Dorsolateral prefrontal cortex (tissue), 120 donors: ENCODE measurements at regions of chr2 and their contacts with region 1.

Region 1: GRCh38 chr2:241315093-241315878 is at the start of gene HDLBP:
- DNase-seq: peak; percentile 95 to 99 (median 97)
- H3K4me3 ChIP-seq: peak within 1 kb of the TSS; percentile 66 to 100 (median 92)
- H3K27ac ChIP-seq: peak within 1 kb of the TSS; percentile 90 to 100 (median 99)
- H3K27me3 ChIP-seq: no peaks in the 10 kb centered on the region
- CTCF ChIP-seq: peak; percentile 43 to 86 (median 68)
- total RNA-seq, gene HDLBP: 216 to 367 (median 256) TPM

Region 2: DNA sequence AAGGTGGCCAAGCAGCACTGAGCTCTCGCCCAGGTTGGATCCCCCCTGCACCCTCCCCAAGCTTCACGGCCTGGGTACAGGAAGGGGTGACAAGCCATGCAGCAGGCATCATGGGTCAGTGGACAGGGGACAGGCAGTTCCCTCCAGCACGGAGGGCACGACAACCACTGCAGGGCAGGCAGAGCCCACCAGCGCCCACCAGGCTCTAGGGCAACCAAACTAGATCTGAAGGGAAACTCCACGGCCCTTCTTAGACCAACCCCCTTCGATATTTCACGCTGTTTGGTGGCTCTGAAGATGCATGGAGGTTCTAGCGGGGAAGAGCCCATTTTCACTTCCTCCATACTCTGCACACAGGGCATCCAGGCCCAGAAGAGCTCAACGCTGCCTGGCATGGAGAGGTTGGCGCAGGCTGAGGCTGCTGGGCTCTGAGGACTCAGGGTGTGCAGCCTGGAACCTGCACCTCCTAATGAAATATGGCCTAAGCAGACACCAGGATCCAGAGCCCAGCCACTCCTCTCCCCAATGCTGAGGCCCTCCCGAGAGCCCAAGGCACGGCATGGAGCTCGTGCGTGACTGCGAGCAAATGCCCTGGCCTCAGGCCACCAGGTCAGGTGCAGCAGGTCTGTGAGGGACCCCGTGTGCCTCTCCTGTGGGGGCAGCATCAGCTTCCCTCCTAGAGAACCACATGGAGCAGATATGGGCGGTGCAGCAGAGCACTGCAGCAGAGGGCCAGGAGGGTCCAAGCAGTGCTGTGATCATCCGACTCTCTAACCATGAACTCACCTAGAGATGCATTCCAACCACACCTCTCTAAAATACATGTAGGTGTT is 204.5 kb before region 1 on chr2:
- intact Hi-C with region 1: no loop called
- DNase-seq: no peak
- H3K4me3 ChIP-seq: no peak overlapping the region
- H3K27ac ChIP-seq: no peak overlapping the region
- H3K27me3 ChIP-seq: no peaks in the 10 kb centered on the region
- CTCF ChIP-seq: no peak

Region 3: GRCh38 chr2:241149925-241150659 is 165.2 kb before region 1 on chr2 and contains the start of gene PPP1R7:
- intact Hi-C with region 1: loop called (anchors 1 to 10 kb)
- DNase-seq: peak; percentile 88 to 96 (median 92)
- H3K4me3 ChIP-seq: peak within 1 kb of the TSS; percentile 76 to 100 (median 97)
- H3K27ac ChIP-seq: peak within 1 kb of the TSS in 58 of 59 donors; percentile 11 to 97 (median 88)
- H3K27me3 ChIP-seq: no peaks in the 10 kb centered on the region
- CTCF ChIP-seq: peak in 31 of 56 donors; percentile 6 to 53 (median 24)
- total RNA-seq, gene PPP1R7: 55.3 to 138 (median 99.6) TPM

Region 4: GRCh38 chr2:241271641-241272297 is 43.5 kb before region 1 on chr2:
- intact Hi-C with region 1: loop called (anchors 2 to 5 kb)
- DNase-seq: peak; percentile 70 to 89 (median 85)
- H3K4me3 ChIP-seq: peak overlapping the region; percentile 54 to 94 (median 80)
- H3K27ac ChIP-seq: peak overlapping the region in 53 of 59 donors; percentile 46 to 93 (median 81)
- H3K27me3 ChIP-seq: no peaks in the 10 kb centered on the region
- CTCF ChIP-seq: peak in 1 of 56 donors; percentile 29

Region 5: GRCh38 chr2:241289597-241289996 is 25.7 kb before region 1 on chr2:
- intact Hi-C with region 1: no loop called
- DNase-seq: no peak
- H3K4me3 ChIP-seq: no peak overlapping the region
- H3K27ac ChIP-seq: peak overlapping the region in 6 of 59 donors; percentile 0 to 50 (median 8)
- H3K27me3 ChIP-seq: no peaks in the 10 kb centered on the region
- CTCF ChIP-seq: peak in 11 of 56 donors; percentile 20 to 51 (median 29)

Region 6: DNA sequence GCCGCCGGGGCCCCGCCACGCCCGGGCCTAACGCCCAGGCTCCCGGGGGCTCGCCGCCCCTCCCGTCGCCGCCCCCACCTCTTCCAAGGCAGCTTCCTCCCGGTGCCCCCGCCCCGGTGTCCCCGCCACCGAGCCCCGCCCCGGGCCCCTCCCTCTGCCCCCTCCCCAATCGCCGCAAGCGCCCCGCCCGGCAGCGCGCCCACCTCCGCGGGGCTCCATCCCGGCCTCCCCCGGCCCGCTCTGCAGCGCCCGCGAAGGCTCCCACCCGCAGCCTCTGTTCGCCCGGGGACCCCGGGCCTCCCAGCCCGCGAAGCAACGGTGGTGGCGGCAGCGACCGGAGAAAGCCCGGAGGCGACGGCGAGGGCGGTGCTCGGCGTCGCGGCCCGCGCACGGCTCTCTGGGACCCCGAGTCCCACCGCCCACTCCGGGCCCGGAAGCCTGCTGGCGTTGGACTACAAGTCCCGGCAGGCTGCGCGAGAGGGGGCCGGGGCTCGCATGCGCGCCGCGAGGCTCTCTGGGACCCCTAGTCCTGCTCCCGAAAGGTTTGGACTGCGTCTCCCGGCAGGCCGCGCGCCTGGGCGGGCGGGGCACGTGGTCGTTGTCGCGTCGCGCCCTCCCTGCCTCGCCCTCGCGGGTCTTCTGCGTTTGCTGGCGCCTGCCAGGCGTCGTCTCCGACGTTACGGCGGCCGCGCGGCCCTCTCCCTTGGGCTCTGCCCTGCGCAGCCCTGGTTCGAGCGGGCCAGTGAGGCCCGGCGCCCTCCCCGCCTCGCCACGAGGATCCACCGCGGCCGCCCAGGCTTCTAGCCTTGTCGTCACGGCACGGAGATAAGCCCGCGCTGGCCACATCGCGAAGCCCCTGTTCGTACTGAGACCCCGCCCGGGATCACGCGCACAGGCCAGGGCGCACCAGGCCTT is 193.2 kb after region 1 on chr2 and contains the start of gene STK25:
- intact Hi-C with region 1: loop called in 1 of 2 experiments (anchors 5 kb)
- DNase-seq: peak; percentile 93 to 99 (median 97)
- H3K4me3 ChIP-seq: peak within 1 kb of the TSS; percentile 56 to 100 (median 90)
- H3K27ac ChIP-seq: peak within 1 kb of the TSS; percentile 66 to 97 (median 90)
- H3K27me3 ChIP-seq: no peaks in the 10 kb centered on the region
- CTCF ChIP-seq: peak in 23 of 56 donors; percentile 6 to 54 (median 29)
- total RNA-seq, gene STK25: 138 to 233 (median 178) TPM